Activated CD4-positive, alpha-beta memory T cell treated with anti-CD3 and anti-CD28 coated beads for 36 hours (primary cell): ENCODE measurements at regions of chr17 and their contacts with region 1.

Region 1: DNA sequence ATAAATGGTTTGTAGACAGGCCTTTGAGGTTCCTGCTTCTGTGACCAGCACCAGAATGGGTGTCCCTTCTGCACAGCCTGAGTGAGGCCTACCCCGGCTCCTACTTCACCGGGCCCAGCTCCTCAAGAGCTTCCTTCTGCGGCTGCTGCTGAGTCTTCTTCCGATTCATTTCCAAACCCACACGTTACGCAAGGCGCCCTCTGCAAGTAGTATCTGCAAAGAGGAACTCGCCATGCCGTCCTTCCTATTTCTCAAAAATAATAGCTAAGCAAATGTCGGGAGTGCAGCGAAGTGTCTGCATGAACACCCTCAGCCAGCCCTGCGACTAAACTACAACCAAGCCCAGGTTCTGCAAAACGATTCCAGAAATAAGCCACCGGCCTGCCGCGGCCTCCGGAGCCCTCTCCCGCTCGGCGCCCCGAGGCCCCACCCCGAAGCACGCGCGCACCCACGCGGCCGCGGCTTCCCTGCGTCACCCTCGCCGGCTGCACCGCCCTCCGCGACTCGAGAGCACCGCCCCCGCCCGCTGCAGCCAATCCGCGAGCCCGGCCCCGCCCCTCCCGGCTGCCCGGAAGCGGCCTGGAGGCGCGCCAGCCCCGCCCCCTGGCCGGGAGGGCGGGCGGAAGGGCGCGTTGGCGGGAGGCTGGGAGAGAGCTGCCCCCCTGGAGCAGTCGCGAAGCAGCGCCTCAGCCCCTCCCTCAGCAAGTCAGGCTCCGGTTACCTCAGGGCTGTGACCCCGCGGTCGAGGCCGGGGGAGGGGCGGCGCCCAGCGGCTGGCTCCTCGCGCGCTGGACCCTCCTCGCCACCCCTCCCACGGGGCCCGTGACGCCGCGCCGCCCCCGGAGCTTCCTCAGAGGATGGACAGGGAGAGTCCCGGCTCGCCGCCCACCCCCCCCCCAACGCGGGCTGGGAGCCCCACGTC is 8.3 kb downstream of the MNT start:
- DNase-seq: peak; percentile 98
- H3K4me3 Mint-ChIP-seq: peak overlapping the region; percentile 88
- H3K27ac Mint-ChIP-seq: peak overlapping the region; percentile 93
- H3K4me1 Mint-ChIP-seq: peaks cover 54% of the 10 kb centered on the region
- H3K27me3 Mint-ChIP-seq: no peaks in the 10 kb centered on the region

Region 2: GRCh38 chr17:2380226-2380922 is 12.1 kb before region 1 on chr17:
- CTCF ChIA-PET with region 1: interaction called, 100 read pairs
- POLR2A ChIA-PET with region 1: interaction called, 21 read pairs
- intact Hi-C with region 1: no loop called
- DNase-seq: no peak
- H3K4me3 Mint-ChIP-seq: no peak overlapping the region
- H3K27ac Mint-ChIP-seq: no peak overlapping the region
- H3K4me1 Mint-ChIP-seq: no peaks in the 10 kb centered on the region
- H3K27me3 Mint-ChIP-seq: no peaks in the 10 kb centered on the region